MCF 10A (cell line): ENCODE measurements at regions of chr1 and their contacts with region 1.

Region 1: GRCh38 chr1:54944610-54945544 is 35.6 kb upstream of the TMEM61 start:
- DNase-seq: peak; percentile 83
- H3K4me3 Mint-ChIP-seq: peak overlapping the region; percentile 44
- H3K27ac Mint-ChIP-seq: peak overlapping the region; percentile 25
- H3K4me1 Mint-ChIP-seq: peaks cover 14% of the 10 kb centered on the region
- H3K27me3 Mint-ChIP-seq: no peaks in the 10 kb centered on the region
- CTCF ChIP-seq: peak; percentile 68

Region 2: GRCh38 chr1:54715493-54716298 is 229.2 kb before region 1 on chr1 and contains the start of gene TTC4:
- CTCF ChIA-PET with region 1: no interaction called
- POLR2A ChIA-PET with region 1: no interaction called
- intact Hi-C with region 1: no loop called
- DNase-seq: peak; percentile 85
- H3K4me3 Mint-ChIP-seq: peak within 1 kb of the TSS; percentile 87
- H3K27ac Mint-ChIP-seq: peak within 1 kb of the TSS; percentile 94
- H3K4me1 Mint-ChIP-seq: peaks cover 7% of the 10 kb centered on the region
- H3K27me3 Mint-ChIP-seq: peaks cover 18% of the 10 kb centered on the region
- CTCF ChIP-seq: no peak
- total RNA-seq, gene TTC4: 25.0 and 25.4 TPM in 2 replicates

Region 3: DNA sequence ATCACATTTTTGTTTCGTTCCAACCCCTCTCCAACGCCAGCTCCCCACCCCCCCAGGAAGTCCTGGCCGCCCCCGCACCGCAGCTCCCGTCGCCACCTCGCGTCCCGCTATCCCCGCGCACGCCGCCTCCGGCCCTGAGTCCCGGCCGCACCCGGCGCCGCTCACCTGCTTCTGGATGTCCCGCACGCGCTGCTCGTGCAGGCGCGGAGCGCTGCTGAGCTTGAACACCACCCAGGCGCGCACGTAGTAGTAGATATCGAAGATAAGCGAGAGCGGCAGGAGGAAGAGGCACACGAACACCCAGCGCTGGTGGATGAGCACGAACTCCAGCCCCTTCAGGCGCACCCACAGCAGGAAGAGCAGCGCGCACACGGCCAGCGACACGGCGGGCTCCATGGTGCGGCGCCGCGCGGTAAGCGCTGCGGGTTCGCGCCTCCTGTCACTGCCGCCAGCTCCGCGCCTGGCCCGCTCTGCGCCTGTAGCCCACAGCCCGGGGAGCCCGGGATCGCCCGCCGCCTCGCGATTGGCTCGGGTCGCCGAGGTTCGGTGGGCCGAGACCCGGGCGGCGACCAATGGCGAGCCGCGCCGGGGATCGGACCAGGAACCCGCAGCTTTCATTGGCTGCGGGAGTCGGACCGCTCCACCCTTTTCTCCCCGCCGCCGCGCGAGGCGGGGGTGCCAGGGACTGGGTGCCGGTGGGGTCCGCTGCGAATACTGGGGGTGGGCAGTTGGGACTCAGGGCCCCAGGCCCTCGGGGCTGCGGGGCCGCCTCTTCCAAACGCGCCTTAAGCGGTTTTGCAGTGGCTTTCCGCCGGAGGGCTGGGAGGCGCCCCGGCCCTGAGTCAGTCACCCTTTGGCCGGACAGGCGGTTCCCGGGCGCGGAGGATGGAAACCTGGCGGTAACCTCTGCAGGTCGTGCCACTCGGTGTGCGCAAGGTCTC is 57.9 kb before region 1 on chr1 and contains the start of gene DHCR24:
- CTCF ChIA-PET with region 1: interaction called, 58 read pairs
- POLR2A ChIA-PET with region 1: interaction called, 65 read pairs
- intact Hi-C with region 1: loop called (anchors 1 kb)
- DNase-seq: peak; percentile 91
- H3K4me3 Mint-ChIP-seq: peak within 1 kb of the TSS; percentile 99
- H3K27ac Mint-ChIP-seq: peak within 1 kb of the TSS; percentile 90
- H3K4me1 Mint-ChIP-seq: peaks cover 49% of the 10 kb centered on the region
- H3K27me3 Mint-ChIP-seq: no peaks in the 10 kb centered on the region
- CTCF ChIP-seq: no peak
- total RNA-seq, gene DHCR24: 126 and 135 TPM in 2 replicates

Region 4: GRCh38 chr1:54927472-54928240 is 17.2 kb before region 1 on chr1:
- CTCF ChIA-PET with region 1: interaction called, 39 read pairs
- POLR2A ChIA-PET with region 1: interaction called, 16 read pairs
- intact Hi-C with region 1: no loop called
- DNase-seq: no peak
- H3K4me3 Mint-ChIP-seq: no peak overlapping the region
- H3K27ac Mint-ChIP-seq: no peak overlapping the region
- H3K4me1 Mint-ChIP-seq: peaks cover 18% of the 10 kb centered on the region
- H3K27me3 Mint-ChIP-seq: peaks cover 8% of the 10 kb centered on the region
- CTCF ChIP-seq: no peak

Region 5: GRCh38 chr1:54959241-54959640 is 14.4 kb after region 1 on chr1:
- CTCF ChIA-PET with region 1: interaction called, 17 read pairs
- POLR2A ChIA-PET with region 1: interaction called, 4 read pairs
- intact Hi-C with region 1: no loop called
- DNase-seq: peak; percentile 79
- H3K4me3 Mint-ChIP-seq: no peak overlapping the region
- H3K27ac Mint-ChIP-seq: no peak overlapping the region
- H3K4me1 Mint-ChIP-seq: peaks cover 15% of the 10 kb centered on the region
- H3K27me3 Mint-ChIP-seq: no peaks in the 10 kb centered on the region
- CTCF ChIP-seq: no peak

Region 6: GRCh38 chr1:54996359-54996868 is 51.5 kb after region 1 on chr1:
- CTCF ChIA-PET with region 1: interaction called, 385 read pairs
- POLR2A ChIA-PET with region 1: interaction called, 7 read pairs
- intact Hi-C with region 1: loop called (anchors 1 kb)
- DNase-seq: peak; percentile 88
- H3K4me3 Mint-ChIP-seq: no peak overlapping the region
- H3K27ac Mint-ChIP-seq: no peak overlapping the region
- H3K4me1 Mint-ChIP-seq: peaks cover 5% of the 10 kb centered on the region
- H3K27me3 Mint-ChIP-seq: no peaks in the 10 kb centered on the region
- CTCF ChIP-seq: peak; percentile 80